ENCODE measurements at regions of chr12 and their contacts with region 1.

Region 1: DNA sequence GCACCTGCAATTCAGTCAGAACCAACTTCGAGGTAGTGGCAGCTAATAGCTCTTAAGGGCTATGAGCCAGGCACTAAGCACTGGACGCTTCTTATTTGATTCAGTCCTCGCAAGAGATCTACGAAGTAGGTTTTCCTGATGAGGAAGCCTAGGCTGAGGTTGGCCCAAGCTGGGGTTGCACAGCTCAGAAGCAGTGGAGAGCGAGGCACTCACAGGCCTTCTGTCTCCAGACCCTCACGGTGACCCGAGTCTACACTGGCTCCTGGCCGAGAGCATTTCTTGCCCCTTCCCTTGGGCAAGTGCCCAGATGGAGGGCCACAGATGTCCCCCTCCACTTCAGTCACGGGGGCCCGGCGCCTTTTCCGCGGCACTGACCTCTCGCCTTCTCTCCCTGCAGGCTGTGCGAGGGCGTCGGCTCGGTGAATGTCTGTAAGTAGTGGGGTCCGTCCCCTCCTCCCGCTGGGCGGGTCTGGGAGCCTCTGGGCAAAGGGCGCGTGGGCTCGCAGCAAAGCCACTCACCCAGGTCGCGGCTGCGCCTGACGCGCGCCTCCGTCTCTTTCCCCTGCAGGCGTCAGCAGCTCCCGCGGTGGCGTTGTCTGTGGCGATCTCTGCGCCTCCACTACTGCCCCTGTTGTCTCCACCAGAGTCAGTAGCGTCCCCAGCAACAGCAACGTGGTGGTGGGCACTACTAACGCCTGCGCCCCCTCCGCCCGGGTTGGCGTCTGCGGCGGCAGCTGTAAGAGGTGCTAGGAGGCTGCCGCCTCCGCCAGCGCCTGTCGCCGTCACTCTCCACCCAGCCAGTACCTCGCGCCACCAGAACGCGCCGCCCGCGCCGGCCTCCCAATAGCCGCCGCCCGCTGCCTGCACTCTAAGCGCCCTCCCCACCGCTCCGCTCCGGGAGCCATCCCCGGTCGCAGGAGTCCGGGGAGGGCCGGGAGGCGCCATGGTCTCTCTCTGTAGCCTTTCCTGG is 13.1 kb downstream of the KRT83 start:
- DNase-seq: no peak
- CTCF ChIP-seq: no peak

Region 2: GRCh38 chr12:52319097-52319496 is 11.0 kb after region 1 on chr12:
- CTCF ChIA-PET with region 1: interaction called, 18 read pairs
- POLR2A ChIA-PET with region 1: no interaction called
- DNase-seq: no peak
- CTCF ChIP-seq: no peak

Measured in GM10248 (cell line).